Cardiac septum (tissue), 1 donor: ENCODE measurements at regions of chr5 and their contacts with region 1.

Region 1: DNA sequence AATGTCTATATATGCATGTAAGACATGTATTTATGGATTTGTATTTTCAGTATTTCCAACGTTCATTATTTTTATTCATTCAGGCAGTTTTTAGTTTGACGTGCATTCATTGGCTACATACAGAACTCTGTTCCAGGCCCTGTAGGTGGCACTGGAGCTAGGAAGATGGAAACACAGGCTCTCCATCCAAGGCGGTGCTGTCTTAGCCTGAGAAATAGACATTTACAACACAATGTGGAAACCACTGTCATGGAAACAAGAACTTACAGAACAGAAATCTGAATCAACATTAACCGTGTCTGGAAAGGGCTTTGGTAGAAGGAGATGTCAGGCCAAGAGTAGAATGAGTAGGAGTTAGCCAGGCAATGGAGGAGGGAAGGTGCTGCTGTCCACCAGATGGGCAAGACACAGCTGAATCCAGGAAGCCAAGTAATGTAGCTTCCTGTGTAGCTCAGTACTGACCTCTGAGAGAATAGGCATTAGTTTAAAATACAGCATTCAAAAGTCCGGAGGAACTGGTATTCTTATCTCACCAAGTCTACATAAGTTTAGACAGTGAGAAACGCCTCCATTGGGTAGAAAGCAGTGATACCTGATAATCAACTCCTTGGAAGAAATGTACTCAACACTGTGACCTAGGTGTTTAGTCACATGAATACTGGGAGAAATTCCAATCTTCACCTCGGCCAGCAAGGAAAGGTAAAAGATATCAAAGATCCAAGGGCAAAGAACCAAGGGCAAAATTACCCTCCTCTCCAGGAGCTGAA is 388.6 kb upstream of the CDH6 start:
- DNase-seq: no peak

Region 2: DNA sequence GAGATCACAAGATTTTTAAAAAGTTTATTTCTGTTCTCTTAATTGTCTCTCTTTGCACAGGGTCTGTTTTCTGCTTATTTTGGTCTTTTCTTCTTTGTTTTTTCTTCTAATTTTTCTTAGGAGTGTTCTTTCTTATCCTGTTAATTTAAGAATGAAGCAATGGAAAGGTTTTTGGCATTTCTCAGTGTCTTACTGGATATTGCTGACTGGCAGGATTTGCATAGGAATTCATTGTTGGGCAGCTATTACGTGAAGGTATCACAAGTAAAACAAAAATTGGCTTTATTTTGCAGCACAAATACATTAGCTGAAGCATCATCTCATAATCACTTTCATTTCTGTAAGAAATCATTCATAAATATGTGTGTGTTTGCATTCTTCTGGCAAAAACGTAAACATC is 178.4 kb before region 1 on chr5:
- intact Hi-C with region 1: no loop called
- DNase-seq: no peak

Region 3: DNA sequence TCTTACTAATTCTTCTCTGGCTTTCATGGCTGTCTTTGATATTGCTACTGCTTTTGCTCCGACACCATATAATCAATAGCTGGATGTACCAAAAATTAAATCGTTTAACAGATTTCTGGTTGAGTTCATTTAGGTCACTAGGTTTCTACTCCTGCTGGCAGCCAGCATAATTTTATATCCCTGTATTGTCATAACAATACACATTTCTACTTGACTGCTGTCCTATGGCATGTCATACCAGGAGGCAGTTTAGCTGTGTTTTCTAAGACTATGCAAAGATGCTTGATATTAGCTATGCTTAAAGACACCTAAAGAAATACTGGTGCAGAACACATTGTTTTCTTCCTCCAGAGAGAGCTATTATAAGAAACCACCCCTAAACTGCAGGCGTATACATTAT is 51.3 kb after region 1 on chr5:
- intact Hi-C with region 1: no loop called
- DNase-seq: no peak

Region 4: DNA sequence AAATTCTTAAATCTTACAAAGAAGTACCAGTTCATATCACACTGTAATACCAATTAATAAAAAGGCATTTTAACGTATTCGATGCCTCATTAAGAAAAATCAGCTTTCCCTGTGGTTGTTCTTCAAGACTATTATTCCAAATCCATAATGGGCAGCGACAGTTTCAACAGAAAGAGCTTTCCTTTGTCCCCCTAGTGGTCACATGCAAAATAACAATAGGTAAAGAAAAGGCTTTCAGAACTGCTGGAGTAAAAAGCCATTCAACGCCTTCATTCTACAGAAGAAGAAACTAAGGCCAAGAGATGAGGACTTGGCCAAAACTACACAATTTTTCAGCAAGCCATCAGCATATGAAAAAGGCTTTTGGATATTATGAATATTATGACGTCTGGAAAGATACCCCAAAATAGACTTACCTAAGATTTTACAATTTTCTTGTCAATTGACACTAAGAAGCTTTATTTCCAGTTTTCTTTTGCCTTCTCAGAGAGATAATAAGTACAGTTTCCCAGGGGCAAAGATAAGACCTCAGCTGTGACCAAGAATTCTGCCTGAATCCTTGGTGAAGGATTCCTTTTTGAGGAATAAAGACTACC is 381.8 kb after region 1 on chr5:
- intact Hi-C with region 1: loop called (anchors 5 kb)
- DNase-seq: no peak

Region 5: GRCh38 chr5:31232273-31232888 is 427.5 kb after region 1 on chr5:
- intact Hi-C with region 1: loop called (anchors 5 kb)
- DNase-seq: no peak